Right ventricle myocardium inferior (tissue), 1 donor: ENCODE measurements at regions of chr1 and their contacts with region 1.

Region 1: DNA sequence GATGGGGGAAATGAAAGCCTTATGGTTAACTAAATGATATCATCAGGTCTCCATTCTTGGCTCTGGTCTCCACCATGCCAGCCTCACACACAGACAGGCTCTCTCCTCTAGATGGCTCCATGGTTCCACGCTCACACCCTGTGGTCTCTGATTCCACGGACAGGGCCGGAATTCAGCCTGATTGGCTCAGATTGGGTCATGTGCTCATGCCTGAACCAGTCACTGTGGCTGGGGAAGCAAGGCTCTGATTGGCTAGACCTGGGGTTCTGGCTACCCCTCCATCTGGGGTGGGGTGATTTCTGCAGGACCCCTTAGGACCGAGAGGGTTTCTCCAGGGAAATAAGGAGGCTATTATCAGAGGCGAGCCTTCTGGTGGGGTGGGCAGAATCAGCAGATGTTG is 277.0 kb downstream of the PTPRU start:
- DNase-seq: no peak
- ATAC-seq: peak; percentile 76

Region 2: GRCh38 chr1:29312469-29313466 is 200.6 kb before region 1 on chr1:
- intact Hi-C with region 1: no loop called
- DNase-seq: no peak
- ATAC-seq: no peak

Region 3: GRCh38 chr1:29364101-29364678 is 149.2 kb before region 1 on chr1:
- intact Hi-C with region 1: no loop called
- DNase-seq: no peak
- ATAC-seq: no peak

Region 4: GRCh38 chr1:29703596-29704370 is 190.4 kb after region 1 on chr1:
- intact Hi-C with region 1: loop called (anchors 10 kb)
- DNase-seq: no peak
- ATAC-seq: no peak